Heart left ventricle (tissue), 16 donors: ENCODE measurements at regions of chr12 and their contacts with region 1.

Region 1: GRCh38 chr12:59403259-59403932 is 192.4 kb upstream of the SLC16A7 start:
- DNase-seq: peak in 2 of 5 donors; percentile 22 to 32
- ATAC-seq: peak in 3 of 4 donors; percentile 65 to 88 (median 68)
- H3K4me3 ChIP-seq: peak overlapping the region in 3 of 12 donors; percentile 13 to 35 (median 16)
- H3K27ac ChIP-seq: no peak overlapping the region
- H3K4me1 ChIP-seq: peaks cover 0 to 5% (median 0%) of the 10 kb centered on the region in 12 donors
- H3K27me3 ChIP-seq: no peaks in the 10 kb centered on the region
- CTCF ChIP-seq: peak; percentile 62 to 82 (median 71)
- POLR2A ChIP-seq: no peak

Region 2: GRCh38 chr12:59317598-59317997 is 85.8 kb before region 1 on chr12:
- intact Hi-C with region 1: no loop called
- DNase-seq: no peak
- ATAC-seq: no peak
- H3K4me3 ChIP-seq: no peak overlapping the region
- H3K27ac ChIP-seq: no peak overlapping the region
- H3K4me1 ChIP-seq: no peaks in the 10 kb centered on the region
- H3K27me3 ChIP-seq: no peaks in the 10 kb centered on the region
- CTCF ChIP-seq: no peak
- POLR2A ChIP-seq: no peak

Region 3: DNA sequence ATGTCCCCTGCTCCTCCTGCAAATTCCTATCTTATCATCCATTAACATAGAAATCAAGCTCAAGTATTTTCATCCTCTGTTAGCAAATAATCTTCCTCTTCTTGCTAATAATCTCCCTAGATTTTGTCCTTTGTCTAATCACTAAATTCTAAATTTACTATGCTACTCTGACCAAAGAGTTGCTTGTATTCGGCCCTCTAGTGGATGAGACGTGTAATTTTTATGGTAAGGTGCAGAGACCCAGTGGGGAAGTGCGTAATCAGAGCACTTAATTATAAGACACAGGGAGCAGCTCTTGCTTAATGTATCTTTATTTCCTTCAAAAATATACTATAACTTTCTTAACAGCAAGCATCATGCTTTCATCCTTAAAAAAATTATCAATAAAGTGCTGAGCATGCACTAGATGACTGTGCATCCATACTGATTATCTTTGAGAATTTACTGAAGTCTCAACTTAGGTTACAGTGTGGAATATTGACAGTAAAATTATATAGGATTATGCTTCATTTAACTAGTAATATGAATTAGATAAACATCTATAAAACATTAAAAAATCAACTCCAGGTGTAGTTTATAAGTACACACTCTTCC is 405.0 kb after region 1 on chr12:
- intact Hi-C with region 1: loop called in 6 of 10 experiments (anchors 5 to 10 kb)
- DNase-seq: no peak
- ATAC-seq: peak in 3 of 4 donors; percentile 57 to 82 (median 70)
- H3K4me3 ChIP-seq: no peak overlapping the region
- H3K27ac ChIP-seq: no peak overlapping the region
- H3K4me1 ChIP-seq: no peaks in the 10 kb centered on the region
- H3K27me3 ChIP-seq: no peaks in the 10 kb centered on the region
- CTCF ChIP-seq: peak; percentile 61 to 81 (median 68)
- POLR2A ChIP-seq: no peak

Region 4: GRCh38 chr12:59940631-59941342 is 537.4 kb after region 1 on chr12:
- intact Hi-C with region 1: no loop called
- DNase-seq: no peak
- ATAC-seq: no peak
- H3K4me3 ChIP-seq: no peak overlapping the region
- H3K27ac ChIP-seq: no peak overlapping the region
- H3K4me1 ChIP-seq: no peaks in the 10 kb centered on the region
- H3K27me3 ChIP-seq: no peaks in the 10 kb centered on the region
- CTCF ChIP-seq: no peak
- POLR2A ChIP-seq: no peak

Region 5: DNA sequence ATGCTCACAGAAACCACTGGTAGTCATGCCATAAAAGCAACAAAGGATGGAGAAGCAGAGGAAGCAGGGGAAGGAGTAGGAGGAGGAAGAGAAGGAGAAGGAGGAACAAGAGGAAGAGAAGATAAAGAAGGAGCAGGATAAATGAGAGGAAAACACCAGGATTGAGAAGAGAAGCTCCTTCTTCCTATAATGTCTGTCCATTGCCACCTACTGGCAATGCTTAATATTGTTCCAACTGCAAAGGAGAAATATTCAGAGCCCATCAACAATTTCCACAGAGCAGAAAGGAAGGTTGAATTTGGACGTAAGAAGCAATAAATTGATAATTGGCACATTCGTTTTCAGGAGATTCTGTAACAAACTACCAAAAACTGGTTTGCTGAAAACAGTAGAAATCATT is 1090.8 kb after region 1 on chr12:
- intact Hi-C with region 1: loop called in 2 of 10 experiments (anchors 10 kb)
- DNase-seq: no peak
- ATAC-seq: no peak
- H3K4me3 ChIP-seq: no peak overlapping the region
- H3K27ac ChIP-seq: no peak overlapping the region
- H3K4me1 ChIP-seq: no peaks in the 10 kb centered on the region
- H3K27me3 ChIP-seq: no peaks in the 10 kb centered on the region
- CTCF ChIP-seq: peak in 10 of 12 donors; percentile 19 to 50 (median 39)
- POLR2A ChIP-seq: no peak